Spleen (tissue), 13 donors: ENCODE measurements at regions of chr2 and their contacts with region 1.

Region 1: DNA sequence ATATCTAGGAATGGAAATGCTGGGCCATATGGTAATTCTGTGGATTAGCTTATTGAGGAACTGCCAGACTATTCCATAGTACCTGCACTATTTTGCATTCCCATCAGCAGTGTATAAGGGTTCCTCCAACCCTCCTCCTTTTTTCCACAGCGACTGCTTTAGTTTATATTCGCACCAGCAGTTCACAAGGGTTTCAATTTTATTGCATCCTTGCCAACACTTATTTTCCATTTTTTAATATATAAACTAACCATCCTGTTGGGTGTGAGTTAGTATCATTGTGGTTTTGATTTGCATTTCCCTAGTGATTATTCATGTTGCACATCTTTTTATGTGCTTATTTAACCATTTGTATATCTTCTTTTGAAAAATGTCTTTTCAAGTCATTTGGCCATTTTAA is 67.0 kb downstream of the NAT8 start:
- DNase-seq: no peak
- H3K4me3 ChIP-seq: no peak overlapping the region
- H3K27ac ChIP-seq: no peak overlapping the region
- H3K4me1 ChIP-seq: no peaks in the 10 kb centered on the region
- H3K27me3 ChIP-seq: no peaks in the 10 kb centered on the region
- CTCF ChIP-seq: no peak
- POLR2A ChIP-seq: no peak

Region 2: DNA sequence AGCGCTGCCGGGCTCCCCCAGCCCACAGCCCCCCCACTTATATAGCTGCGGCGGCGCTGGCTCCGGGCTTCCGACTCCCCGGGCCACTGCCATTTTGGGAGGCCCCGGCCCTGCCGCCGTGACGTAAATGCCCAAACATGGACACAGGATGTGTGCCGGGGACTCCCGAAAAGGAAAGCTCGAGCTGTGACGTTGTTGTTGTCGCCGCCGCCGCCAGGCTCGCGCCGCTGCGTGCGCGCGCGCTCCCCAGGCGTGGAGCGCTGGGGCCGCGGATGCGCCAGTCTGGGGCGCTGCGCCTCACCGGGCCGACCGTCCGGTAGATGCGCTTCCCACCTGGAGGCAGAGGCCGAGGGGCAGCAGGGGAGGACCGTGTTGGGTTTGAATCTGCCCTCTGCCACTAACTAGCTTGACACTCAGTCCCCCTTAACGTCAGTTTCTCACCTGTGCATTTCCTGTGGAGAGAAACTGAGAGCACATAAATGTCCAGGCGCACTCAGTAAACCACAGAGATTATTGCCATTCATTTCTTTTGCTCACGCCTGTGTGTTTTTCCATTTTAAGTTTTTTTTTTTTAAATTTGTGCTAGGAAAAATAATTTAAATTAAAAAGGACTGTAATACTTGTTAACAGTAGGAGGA is 281.6 kb before region 1 on chr2 and contains the start of gene EGR4:
- intact Hi-C with region 1: no loop called
- DNase-seq: peak; percentile 93
- H3K4me3 ChIP-seq: peak within 1 kb of the TSS; percentile 15 to 73 (median 54)
- H3K27ac ChIP-seq: no peak within 1 kb of the TSS
- H3K4me1 ChIP-seq: peaks cover 20 to 37% (median 32%) of the 10 kb centered on the region in 6 donors
- H3K27me3 ChIP-seq: peaks cover 8 to 100% (median 79%) of the 10 kb centered on the region in 7 donors
- CTCF ChIP-seq: no peak
- POLR2A ChIP-seq: no peak
- total RNA-seq, gene EGR4: not detected

Region 3: GRCh38 chr2:73468376-73468775 is 106.9 kb before region 1 on chr2:
- intact Hi-C with region 1: loop called (anchors 10 kb)
- DNase-seq: no peak
- H3K4me3 ChIP-seq: no peak overlapping the region
- H3K27ac ChIP-seq: no peak overlapping the region
- H3K4me1 ChIP-seq: no peaks in the 10 kb centered on the region
- H3K27me3 ChIP-seq: no peaks in the 10 kb centered on the region
- CTCF ChIP-seq: no peak
- POLR2A ChIP-seq: no peak

Region 4: GRCh38 chr2:73651586-73652230 is 76.4 kb after region 1 on chr2:
- intact Hi-C with region 1: no loop called
- DNase-seq: no peak
- H3K4me3 ChIP-seq: no peak overlapping the region
- H3K27ac ChIP-seq: no peak overlapping the region
- H3K4me1 ChIP-seq: no peaks in the 10 kb centered on the region
- H3K27me3 ChIP-seq: peaks cover 0 to 5% (median 0%) of the 10 kb centered on the region in 7 donors
- CTCF ChIP-seq: no peak
- POLR2A ChIP-seq: no peak